Heart left ventricle (tissue), 16 donors: ENCODE measurements at regions of chr7 and their contacts with region 1.

Region 1: DNA sequence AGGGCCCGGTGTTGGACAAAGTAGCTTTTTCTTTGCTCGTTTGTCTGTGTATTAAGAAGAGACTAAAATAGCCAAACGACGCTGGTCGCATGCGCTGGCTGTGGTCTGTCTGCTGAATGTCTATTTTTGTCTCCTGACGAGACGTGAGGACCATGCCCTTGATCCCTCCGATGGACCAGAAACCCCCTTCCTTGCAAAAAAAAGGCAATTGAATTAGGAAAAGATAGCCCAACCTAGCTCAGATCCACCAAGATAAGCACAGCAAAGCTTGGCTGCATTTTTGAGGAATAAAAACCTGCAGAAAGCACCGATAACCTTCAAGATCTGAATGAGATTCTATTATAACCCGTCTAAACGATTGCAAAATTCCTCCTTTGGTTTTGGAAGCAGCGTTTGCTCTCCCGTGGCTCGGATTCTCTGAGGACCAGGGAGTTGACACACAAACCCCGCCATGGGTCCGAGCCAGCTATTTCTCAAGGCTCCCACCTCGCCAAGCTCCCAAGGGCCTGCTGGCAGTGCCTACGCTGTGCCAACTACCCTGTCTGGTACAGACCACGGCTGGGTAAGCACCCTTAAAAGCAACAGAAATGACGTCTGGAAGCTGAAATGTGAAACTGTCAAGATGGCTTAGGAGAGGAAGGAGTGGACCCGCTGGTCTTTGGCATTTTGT is 17.7 kb upstream of the TTYH3 start:
- DNase-seq: peak in 2 of 5 donors; percentile 75 to 84
- ATAC-seq: peak; percentile 30 to 76 (median 68)
- H3K4me3 ChIP-seq: peak overlapping the region in 3 of 12 donors; percentile 6 to 10 (median 6)
- H3K27ac ChIP-seq: peak overlapping the region in 11 of 12 donors; percentile 63 to 92 (median 79)
- H3K4me1 ChIP-seq: peaks cover 0 to 55% (median 32%) of the 10 kb centered on the region in 12 donors
- H3K27me3 ChIP-seq: no peaks in the 10 kb centered on the region
- CTCF ChIP-seq: no peak
- POLR2A ChIP-seq: no peak

Region 2: GRCh38 chr7:1579481-1580421 is 1034.3 kb before region 1 on chr7:
- intact Hi-C with region 1: no loop called
- DNase-seq: peak; percentile 69 to 88 (median 75)
- ATAC-seq: peak; percentile 82 to 93 (median 90)
- H3K4me3 ChIP-seq: no peak overlapping the region
- H3K27ac ChIP-seq: no peak overlapping the region
- H3K4me1 ChIP-seq: peaks cover 0 to 17% (median 6%) of the 10 kb centered on the region in 12 donors
- H3K27me3 ChIP-seq: no peaks in the 10 kb centered on the region
- CTCF ChIP-seq: peak; percentile 79 to 90 (median 84)
- POLR2A ChIP-seq: no peak

Region 3: DNA sequence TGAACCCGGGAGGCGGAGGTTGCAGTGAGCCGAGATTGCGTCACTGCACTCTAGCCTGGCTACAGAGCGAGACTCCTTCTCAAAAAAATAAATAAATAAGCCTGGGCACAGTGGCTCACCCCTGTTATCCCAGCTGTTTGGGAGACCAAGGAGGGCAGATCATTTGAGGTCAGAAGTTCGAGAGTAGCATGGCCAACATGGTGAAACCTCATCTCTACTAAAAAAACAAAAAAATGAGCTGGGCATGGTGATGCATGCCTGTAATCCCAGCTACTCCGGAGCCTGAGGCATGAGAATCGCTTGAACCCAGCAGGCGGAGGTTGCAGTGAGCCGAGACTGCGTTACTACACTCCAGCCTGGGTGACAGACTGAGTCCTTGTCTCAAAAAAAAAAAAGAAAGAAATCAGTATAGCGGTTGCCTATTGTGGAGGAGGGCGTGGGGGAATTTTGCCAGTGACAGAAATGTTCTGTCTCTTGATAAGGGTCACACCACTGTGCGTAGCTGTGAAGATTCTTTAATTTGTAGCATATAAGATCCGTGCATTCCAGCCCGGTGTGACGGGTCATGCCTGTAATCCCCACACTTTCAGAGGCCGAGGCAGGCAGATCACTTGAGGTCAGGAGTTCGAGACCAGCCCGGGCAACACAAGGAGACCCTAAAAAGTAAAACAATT is 277.3 kb before region 1 on chr7:
- intact Hi-C with region 1: no loop called
- DNase-seq: no peak
- ATAC-seq: no peak
- H3K4me3 ChIP-seq: no peak overlapping the region
- H3K27ac ChIP-seq: no peak overlapping the region
- H3K4me1 ChIP-seq: no peaks in the 10 kb centered on the region
- H3K27me3 ChIP-seq: no peaks in the 10 kb centered on the region
- CTCF ChIP-seq: no peak
- POLR2A ChIP-seq: no peak

Region 4: GRCh38 chr7:2660585-2661408 is 46.7 kb after region 1 on chr7:
- intact Hi-C with region 1: loop called in 2 of 10 experiments (anchors 5 kb)
- DNase-seq: peak in 1 of 5 donors; percentile 67
- ATAC-seq: no peak
- H3K4me3 ChIP-seq: no peak overlapping the region
- H3K27ac ChIP-seq: no peak overlapping the region
- H3K4me1 ChIP-seq: peaks cover 0 to 34% (median 16%) of the 10 kb centered on the region in 12 donors
- H3K27me3 ChIP-seq: peaks cover 0 to 2% (median 0%) of the 10 kb centered on the region in 9 donors
- CTCF ChIP-seq: peak in 5 of 12 donors; percentile 6 to 25 (median 22)
- POLR2A ChIP-seq: no peak

Region 5: DNA sequence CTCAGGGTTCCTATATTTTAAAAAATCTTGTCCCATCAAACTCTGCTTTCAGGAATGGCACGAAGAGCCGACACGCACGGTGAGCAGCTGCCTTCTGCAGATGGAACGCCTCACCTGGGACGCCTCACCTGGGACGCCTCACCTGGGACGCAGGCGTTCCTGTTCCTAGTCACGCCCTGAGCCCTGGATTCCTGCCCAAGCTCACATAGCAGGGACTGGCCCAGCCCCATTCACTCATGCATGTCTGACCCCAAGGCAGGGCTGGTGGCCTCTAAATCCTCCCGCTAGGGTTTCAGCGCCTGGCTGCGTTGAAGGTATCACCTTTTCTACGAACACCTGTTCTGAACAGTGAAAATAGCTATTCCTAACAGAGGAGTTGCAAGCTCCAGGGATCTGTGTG is 379.8 kb after region 1 on chr7:
- intact Hi-C with region 1: no loop called
- DNase-seq: no peak
- ATAC-seq: no peak
- H3K4me3 ChIP-seq: no peak overlapping the region
- H3K27ac ChIP-seq: no peak overlapping the region
- H3K4me1 ChIP-seq: no peaks in the 10 kb centered on the region
- H3K27me3 ChIP-seq: no peaks in the 10 kb centered on the region
- CTCF ChIP-seq: no peak
- POLR2A ChIP-seq: no peak